Colonic mucosa (tissue), 4 donors: ENCODE measurements at regions of chr5 and their contacts with region 1.

Region 1: DNA sequence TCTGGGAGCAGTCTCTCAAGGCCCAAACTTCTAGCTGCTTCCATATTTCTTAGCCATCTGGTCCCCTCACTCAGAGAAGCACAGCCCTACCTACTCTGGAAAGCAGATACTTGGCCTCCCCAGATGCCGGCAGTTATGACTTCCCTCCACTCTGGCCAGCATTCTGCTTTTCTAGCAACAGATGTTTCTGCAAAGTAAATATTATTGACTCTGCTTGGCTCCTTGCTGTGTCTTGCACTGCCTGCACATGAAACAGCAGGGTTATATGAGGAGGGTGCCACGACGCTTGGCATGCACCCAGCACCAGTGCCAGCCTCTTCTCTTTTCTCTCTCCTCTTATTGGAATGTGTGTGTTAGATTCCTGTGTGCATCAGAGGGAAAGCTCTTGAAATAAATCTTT is 99.7 kb downstream of the ARHGAP26 start:
- DNase-seq: peak; percentile 58
- H3K4me3 ChIP-seq: no peak overlapping the region
- H3K27ac ChIP-seq: peak overlapping the region; percentile 84
- H3K4me1 ChIP-seq: peaks cover 55% of the 10 kb centered on the region
- H3K27me3 ChIP-seq: no peaks in the 10 kb centered on the region
- CTCF ChIP-seq: no peak

Region 2: DNA sequence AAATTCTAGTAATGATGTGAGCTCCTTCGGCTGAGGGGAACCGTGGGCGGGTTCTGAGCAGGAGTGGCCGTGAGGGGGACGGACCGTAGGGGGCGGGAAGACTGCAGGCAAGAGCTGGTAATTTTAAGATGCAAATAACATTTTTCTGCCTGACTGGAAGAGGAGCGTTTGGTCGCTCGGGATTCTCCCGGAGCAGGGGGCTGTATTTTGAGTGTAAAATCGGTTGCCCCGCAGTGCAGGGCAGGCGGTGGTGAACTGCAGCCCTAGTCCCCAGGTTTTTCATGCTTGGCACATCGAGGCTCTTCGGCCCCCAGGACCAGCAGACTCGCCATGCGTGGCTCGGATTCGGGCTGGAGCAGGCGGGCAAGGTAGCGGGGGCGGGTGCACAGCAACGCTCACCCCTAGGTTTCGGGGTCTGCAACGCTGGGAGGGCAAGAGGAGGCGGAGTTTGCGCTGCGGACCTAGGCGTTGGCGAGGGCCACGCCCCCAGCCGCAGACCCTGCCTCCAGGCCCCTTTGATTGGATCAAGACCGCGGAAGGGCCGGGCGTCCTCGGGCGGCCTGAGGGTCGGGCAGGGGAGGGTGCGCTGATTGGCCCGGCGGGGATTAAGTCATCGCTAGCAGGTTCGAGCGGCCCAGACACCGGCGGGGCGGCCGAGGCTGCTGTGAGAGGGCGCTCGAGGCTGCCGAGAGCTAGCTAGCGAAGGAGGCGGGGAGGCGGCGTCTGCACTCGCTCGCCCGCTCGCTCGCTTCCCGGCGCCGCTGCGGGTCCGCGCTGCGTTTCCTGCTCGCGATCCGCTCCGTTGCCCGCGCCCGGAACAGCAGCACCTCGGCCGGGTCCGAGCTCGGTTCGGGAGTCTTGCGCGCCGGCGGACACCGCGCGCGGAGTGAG is 99.9 kb before region 1 on chr5 and contains the start of gene ARHGAP26:
- intact Hi-C with region 1: loop called (anchors 5 kb)
- DNase-seq: peak; percentile 98
- H3K4me3 ChIP-seq: peak within 1 kb of the TSS; percentile 86
- H3K27ac ChIP-seq: peak within 1 kb of the TSS; percentile 74
- H3K4me1 ChIP-seq: peaks cover 11% of the 10 kb centered on the region
- H3K27me3 ChIP-seq: no peaks in the 10 kb centered on the region
- CTCF ChIP-seq: no peak
- total RNA-seq, gene ARHGAP26: 59.1 to 74.0 TPM

Region 3: DNA sequence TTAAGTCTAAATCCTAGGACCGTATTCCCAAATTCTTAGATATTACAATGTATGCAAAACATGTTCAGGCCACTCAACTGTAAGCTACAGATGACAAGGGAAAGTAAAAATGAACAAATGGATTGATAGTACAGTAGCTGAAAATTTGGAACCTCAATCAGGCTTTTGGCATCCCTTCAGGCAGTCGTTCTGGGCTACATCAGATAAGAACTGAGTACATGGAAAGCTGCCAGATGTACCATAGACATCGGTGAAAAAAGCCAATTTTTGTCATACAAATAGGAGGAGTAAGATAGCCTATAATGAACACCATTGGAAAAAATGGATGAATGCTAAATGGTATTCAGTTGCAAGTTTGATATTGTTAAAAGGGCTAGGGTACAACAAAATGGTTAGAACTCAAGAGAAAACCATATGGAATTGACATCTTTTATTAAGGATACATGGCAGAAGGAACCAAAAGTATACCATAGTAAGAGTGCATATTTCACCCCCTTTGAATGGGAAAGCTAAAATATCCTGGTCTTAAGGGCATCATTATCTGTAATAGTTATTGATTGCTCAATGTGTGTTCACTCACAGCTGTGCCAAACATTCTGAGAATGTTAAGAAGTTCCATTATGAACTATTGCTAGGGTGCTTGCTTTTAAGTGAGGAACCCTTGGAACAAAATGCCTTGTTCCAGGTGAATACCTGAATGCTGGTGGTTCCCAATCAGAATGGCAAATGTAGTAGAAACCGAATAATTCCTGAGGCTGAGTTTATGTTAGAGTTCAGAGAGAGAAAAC is 447.2 kb after region 1 on chr5:
- intact Hi-C with region 1: no loop called
- DNase-seq: no peak
- H3K4me3 ChIP-seq: no peak overlapping the region
- H3K27ac ChIP-seq: no peak overlapping the region
- H3K4me1 ChIP-seq: no peaks in the 10 kb centered on the region
- H3K27me3 ChIP-seq: no peaks in the 10 kb centered on the region
- CTCF ChIP-seq: no peak